ENCODE measurements at regions of chr6 and their contacts with region 1.

Region 1: DNA sequence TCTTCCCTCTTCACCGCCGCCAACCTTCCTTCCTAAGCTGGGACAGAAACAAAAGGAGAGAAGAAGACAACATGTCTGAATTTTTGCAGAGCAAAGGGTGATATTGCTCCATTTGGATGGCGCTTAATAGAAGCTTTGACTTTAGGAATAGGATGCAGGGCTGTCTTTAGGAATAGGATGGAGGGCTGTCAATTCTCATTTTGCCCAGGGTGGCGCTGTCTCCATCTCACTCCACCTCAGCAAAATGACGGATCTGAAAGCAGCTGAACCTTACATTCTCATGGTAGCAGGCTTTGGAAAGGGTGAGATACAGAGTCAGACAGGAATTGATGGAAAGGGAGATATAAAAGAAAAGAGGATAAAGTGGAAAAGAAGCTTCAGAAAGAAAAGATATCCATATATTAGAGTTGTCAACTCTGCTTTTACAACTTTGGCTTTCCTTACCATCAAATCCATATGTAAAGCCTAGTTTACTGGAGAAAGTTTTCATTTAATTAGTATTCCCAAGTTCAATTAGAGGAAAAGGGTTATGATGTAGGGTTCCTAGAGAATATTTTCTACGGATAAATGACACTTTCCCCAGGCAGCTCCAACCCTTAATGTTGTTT is 2.4 kb downstream of the MTCL3 start:
- DNase-seq: peak; percentile 66
- CTCF ChIP-seq: peak; percentile 62

Region 2: GRCh38 chr6:127464881-127465459 is 51.8 kb before region 1 on chr6:
- CTCF ChIA-PET with region 1: interaction called, 14 read pairs
- POLR2A ChIA-PET with region 1: no interaction called
- DNase-seq: peak; percentile 55
- CTCF ChIP-seq: peak; percentile 86

Region 3: DNA sequence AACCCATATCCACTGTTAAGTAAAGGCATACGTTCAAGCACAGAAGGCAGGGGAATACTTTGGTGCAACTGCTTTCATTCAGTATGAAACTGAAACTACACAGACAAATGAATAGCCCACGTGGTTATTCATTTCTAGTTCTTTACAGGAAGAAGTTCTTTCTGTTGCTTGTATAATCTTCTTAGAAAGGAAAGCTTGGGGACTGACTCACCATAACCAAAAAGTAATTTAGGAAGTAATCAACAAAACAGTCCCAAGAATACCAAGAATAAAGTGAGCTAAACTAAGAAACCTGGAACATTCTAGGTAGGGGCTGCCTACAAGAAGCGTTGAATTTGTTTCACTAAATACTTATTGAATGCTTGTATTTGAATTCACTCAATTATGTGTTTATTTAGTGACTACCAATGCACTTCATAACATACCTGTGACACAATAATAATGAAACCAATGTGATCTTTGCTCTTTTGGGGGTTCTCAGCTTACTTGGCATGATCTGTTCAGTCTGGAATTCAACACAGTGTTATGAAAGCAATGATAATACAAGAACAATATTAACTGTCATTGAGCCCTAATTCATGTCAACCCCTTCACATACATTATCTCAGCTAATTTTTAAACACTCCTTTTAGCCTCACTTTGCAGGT is 32.4 kb before region 1 on chr6:
- CTCF ChIA-PET with region 1: interaction called, 15 read pairs
- POLR2A ChIA-PET with region 1: no interaction called
- DNase-seq: peak; percentile 61
- CTCF ChIP-seq: no peak

Region 4: DNA sequence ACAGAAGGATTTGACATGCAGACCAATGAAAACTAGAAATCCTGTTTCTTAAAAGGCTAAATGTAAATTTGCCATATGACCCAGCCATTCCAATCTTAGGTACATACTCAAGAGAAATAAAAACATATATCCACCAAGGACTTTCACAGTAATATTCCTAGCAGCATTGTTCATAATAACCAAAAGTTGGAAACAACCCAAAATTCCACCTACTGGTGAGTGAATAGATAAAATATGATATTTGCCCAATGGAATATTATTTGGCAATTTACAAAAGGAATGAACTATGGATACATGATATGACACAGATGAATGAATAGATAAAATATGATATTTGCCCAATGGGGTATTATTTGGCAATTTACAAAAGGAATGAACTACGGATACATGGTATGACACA is 20.3 kb before region 1 on chr6:
- CTCF ChIA-PET with region 1: interaction called, 28 read pairs
- POLR2A ChIA-PET with region 1: no interaction called
- DNase-seq: no peak
- CTCF ChIP-seq: no peak

Region 5: DNA sequence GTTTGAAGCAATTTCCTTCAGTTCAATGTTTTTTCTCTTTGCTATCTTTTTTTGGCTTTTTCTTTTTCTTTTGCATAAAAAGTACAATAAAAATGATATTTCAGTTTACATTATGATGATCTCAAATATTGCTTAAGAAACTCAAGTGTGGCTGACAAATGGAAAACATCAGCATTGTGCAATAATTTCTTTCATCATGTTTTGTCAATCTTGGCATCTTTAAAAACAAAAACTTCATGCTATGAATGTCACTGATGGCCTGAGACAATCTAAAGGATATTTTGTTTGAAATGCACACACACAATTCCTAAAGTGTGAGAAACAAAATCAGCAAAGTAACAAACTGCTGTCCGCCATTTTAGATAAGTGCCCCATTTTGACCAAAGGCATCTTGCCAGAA is 16.2 kb after region 1 on chr6:
- CTCF ChIA-PET with region 1: interaction called, 31 read pairs
- POLR2A ChIA-PET with region 1: no interaction called
- DNase-seq: no peak
- CTCF ChIP-seq: no peak

Region 6: GRCh38 chr6:127539272-127539671 is 22.5 kb after region 1 on chr6:
- CTCF ChIA-PET with region 1: interaction called, 31 read pairs
- POLR2A ChIA-PET with region 1: no interaction called
- DNase-seq: peak; percentile 31
- CTCF ChIP-seq: peak; percentile 42

Region 7: GRCh38 chr6:128053109-128053508 is 536.3 kb after region 1 on chr6:
- CTCF ChIA-PET with region 1: no interaction called
- POLR2A ChIA-PET with region 1: no interaction called
- DNase-seq: no peak
- CTCF ChIP-seq: no peak